ENCODE measurements at regions of chr16 and their contacts with region 1.

Region 1: GRCh38 chr16:4506450-4506849 is 30.3 kb downstream of the HMOX2 start:
- DNase-seq: peak; percentile 64
- H3K4me3 ChIP-seq: no peak overlapping the region
- H3K27ac ChIP-seq: no peak overlapping the region
- H3K4me1 ChIP-seq: peaks cover 7% of the 10 kb centered on the region
- H3K27me3 ChIP-seq: no peaks in the 10 kb centered on the region
- CTCF ChIP-seq: peak; percentile 82 to 88

Region 2: DNA sequence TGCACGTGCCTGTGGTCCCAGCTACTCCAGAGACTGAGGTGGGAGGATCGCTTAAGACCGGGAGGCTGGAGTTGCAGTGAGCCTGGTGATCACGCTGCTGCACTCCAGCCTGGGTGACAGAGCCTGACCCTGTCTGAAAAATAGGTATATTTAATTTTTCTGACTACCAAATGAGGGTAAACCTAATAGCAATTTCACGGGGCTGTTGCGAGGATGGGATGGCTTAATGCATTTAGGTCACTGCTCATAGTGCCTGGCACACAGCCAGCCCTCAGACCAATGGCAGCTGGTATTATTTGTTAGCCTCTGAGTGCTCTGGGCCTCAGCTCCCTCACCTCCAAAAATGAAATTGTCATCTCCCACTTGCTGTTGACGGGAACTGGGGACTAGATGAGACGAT is 38.0 kb after region 1 on chr16:
- CTCF ChIA-PET with region 1: interaction called, 10 read pairs
- dilution Hi-C with region 1: no loop called
- in situ Hi-C with region 1: no loop called
- intact Hi-C with region 1: loop called (anchors 1 kb)
- DNase-seq: no peak
- H3K4me3 ChIP-seq: no peak overlapping the region
- H3K27ac ChIP-seq: no peak overlapping the region
- H3K4me1 ChIP-seq: no peaks in the 10 kb centered on the region
- H3K27me3 ChIP-seq: no peaks in the 10 kb centered on the region
- CTCF ChIP-seq: no peak

Region 3: GRCh38 chr16:4574919-4575705 is 68.7 kb after region 1 on chr16:
- CTCF ChIA-PET with region 1: no interaction called
- dilution Hi-C with region 1: loop called (anchors 5 kb)
- in situ Hi-C with region 1: no loop called
- intact Hi-C with region 1: no loop called
- DNase-seq: no peak
- H3K4me3 ChIP-seq: no peak overlapping the region
- H3K27ac ChIP-seq: no peak overlapping the region
- H3K4me1 ChIP-seq: no peaks in the 10 kb centered on the region
- H3K27me3 ChIP-seq: no peaks in the 10 kb centered on the region
- CTCF ChIP-seq: no peak

Region 4: GRCh38 chr16:4580245-4580644 is 73.8 kb after region 1 on chr16:
- CTCF ChIA-PET with region 1: no interaction called
- dilution Hi-C with region 1: no loop called
- in situ Hi-C with region 1: no loop called
- intact Hi-C with region 1: loop called (anchors 1 kb)
- DNase-seq: no peak
- H3K4me3 ChIP-seq: no peak overlapping the region
- H3K27ac ChIP-seq: no peak overlapping the region
- H3K4me1 ChIP-seq: no peaks in the 10 kb centered on the region
- H3K27me3 ChIP-seq: no peaks in the 10 kb centered on the region
- CTCF ChIP-seq: no peak

Region 5: GRCh38 chr16:4624015-4624826 is 117.8 kb after region 1 on chr16 and contains the start of gene MGRN1:
- CTCF ChIA-PET with region 1: no interaction called
- dilution Hi-C with region 1: no loop called
- in situ Hi-C with region 1: no loop called
- intact Hi-C with region 1: loop called (anchors 1 kb)
- DNase-seq: peak; percentile 96
- H3K4me3 ChIP-seq: peak within 1 kb of the TSS; percentile 78 to 96 (median 87)
- H3K27ac ChIP-seq: peak within 1 kb of the TSS; percentile 78
- H3K4me1 ChIP-seq: peaks cover 14% of the 10 kb centered on the region
- H3K27me3 ChIP-seq: no peaks in the 10 kb centered on the region
- CTCF ChIP-seq: peak; percentile 97 to 99
- total RNA-seq, gene MGRN1: 34.2 to 64.8 TPM

Region 6: DNA sequence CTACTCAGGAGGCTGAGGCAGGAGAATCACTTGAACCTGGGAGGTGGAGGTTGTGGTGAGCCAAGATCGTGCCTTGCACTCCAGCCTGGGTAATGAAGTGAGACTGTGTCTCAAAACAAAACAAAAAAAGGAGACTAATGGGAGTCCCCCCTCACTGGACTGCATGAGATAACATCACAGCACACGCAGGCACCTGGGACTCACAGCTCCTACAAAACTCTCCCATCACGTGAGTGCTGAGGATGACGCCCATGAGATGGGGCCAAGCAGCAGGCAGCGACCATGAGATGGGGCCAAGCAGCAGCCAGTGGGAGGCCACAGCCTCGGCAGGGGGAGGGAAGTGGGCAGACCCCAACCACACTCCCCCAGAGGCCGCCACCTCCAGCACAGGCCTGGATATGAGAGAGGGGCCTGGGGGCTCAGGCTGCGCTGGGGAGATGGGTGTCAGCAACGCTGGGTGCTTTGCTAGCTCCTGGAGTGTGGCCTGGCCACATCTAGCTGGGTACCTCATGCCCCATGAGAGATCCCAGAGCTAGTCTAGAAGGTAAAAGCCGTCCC is 243.3 kb after region 1 on chr16:
- CTCF ChIA-PET with region 1: no interaction called
- dilution Hi-C with region 1: loop called (anchors 10 kb)
- in situ Hi-C with region 1: no loop called
- intact Hi-C with region 1: no loop called
- DNase-seq: no peak
- H3K4me3 ChIP-seq: no peak overlapping the region
- H3K27ac ChIP-seq: no peak overlapping the region
- H3K4me1 ChIP-seq: no peaks in the 10 kb centered on the region
- H3K27me3 ChIP-seq: no peaks in the 10 kb centered on the region
- CTCF ChIP-seq: no peak